SK-N-SH (cell line): ENCODE measurements at regions of chr2 and their contacts with region 1.

Region 1: GRCh38 chr2:27281855-27282559 is at the start of gene TRIM54:
- DNase-seq: no peak
- H3K4me3 ChIP-seq: no peak within 1 kb of the TSS
- H3K27ac ChIP-seq: no peak within 1 kb of the TSS
- H3K4me1 ChIP-seq: peaks cover 0 to 23% of the 10 kb centered on the region in 2 experiments; a peak in 3 of 4 replicates
- H3K27me3 ChIP-seq: peaks cover 12% of the 10 kb centered on the region; the same call in 1 of the 2 replicates
- CTCF ChIP-seq: no peak
- EP300 ChIP-seq: no peak
- RAD21 ChIP-seq: no peak
- polyA plus RNA-seq, gene TRIM54: 0.28 and 0.36 TPM in 2 replicates

Region 2: DNA sequence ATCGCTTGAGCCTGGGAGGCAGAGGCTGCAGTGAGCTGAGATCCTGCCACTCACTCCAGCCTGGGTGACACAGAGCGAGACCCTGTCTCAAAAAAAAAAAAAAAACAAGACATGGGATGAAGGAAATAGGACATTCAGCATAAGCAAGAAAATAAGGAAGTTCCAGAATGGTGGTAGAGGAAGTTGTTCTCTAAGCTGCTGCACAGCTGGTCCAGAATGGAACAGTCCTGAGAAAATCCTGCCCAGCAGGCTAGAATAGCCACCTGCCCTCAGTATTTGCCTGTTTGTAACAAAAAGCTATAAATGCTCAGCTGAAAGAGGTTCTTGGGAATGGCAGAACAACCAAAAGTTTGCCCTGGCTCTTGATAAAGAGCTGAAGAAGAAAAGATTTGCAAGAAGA is 322.7 kb before region 1 on chr2:
- CTCF ChIA-PET with region 1: interaction called, 13 read pairs
- POLR2A ChIA-PET with region 1: no interaction called
- DNase-seq: no peak
- H3K4me3 ChIP-seq: no peak overlapping the region
- H3K27ac ChIP-seq: no peak overlapping the region
- H3K4me1 ChIP-seq: peaks cover 0 to 3% of the 10 kb centered on the region in 2 experiments; a peak in 1 of 4 replicates
- H3K27me3 ChIP-seq: peaks cover 48% of the 10 kb centered on the region
- CTCF ChIP-seq: no peak
- EP300 ChIP-seq: no peak
- RAD21 ChIP-seq: no peak

Region 3: GRCh38 chr2:27117995-27118524 is 163.9 kb before region 1 on chr2:
- CTCF ChIA-PET with region 1: interaction called, 12 read pairs
- POLR2A ChIA-PET with region 1: no interaction called
- DNase-seq: peak; percentile 52
- H3K4me3 ChIP-seq: peak overlapping the region; percentile 60 to 70
- H3K27ac ChIP-seq: peak overlapping the region in 1 of 2 experiments; percentile 48; a peak in 1 of 4 replicates
- H3K4me1 ChIP-seq: peaks cover 0 to 12% of the 10 kb centered on the region in 2 experiments; a peak in 1 of 4 replicates
- H3K27me3 ChIP-seq: no peaks in the 10 kb centered on the region
- CTCF ChIP-seq: no peak
- EP300 ChIP-seq: no peak
- RAD21 ChIP-seq: no peak

Region 4: GRCh38 chr2:27185331-27186026 is 96.5 kb before region 1 on chr2:
- CTCF ChIA-PET with region 1: interaction called, 10 read pairs
- POLR2A ChIA-PET with region 1: no interaction called
- DNase-seq: no peak
- H3K4me3 ChIP-seq: no peak overlapping the region
- H3K27ac ChIP-seq: peak overlapping the region in 1 of 2 experiments; percentile 46; a peak in 2 of 4 replicates
- H3K4me1 ChIP-seq: peaks cover 0 to 26% of the 10 kb centered on the region in 2 experiments; a peak in 3 of 4 replicates
- H3K27me3 ChIP-seq: no peaks in the 10 kb centered on the region
- CTCF ChIP-seq: no peak
- EP300 ChIP-seq: no peak
- RAD21 ChIP-seq: no peak

Region 5: GRCh38 chr2:27233341-27233740 is 48.7 kb before region 1 on chr2:
- CTCF ChIA-PET with region 1: interaction called, 39 read pairs
- POLR2A ChIA-PET with region 1: interaction called, 6 read pairs
- DNase-seq: no peak
- H3K4me3 ChIP-seq: no peak overlapping the region
- H3K27ac ChIP-seq: no peak overlapping the region
- H3K4me1 ChIP-seq: no peaks in the 10 kb centered on the region
- H3K27me3 ChIP-seq: no peaks in the 10 kb centered on the region
- CTCF ChIP-seq: no peak
- EP300 ChIP-seq: no peak
- RAD21 ChIP-seq: no peak

Region 6: DNA sequence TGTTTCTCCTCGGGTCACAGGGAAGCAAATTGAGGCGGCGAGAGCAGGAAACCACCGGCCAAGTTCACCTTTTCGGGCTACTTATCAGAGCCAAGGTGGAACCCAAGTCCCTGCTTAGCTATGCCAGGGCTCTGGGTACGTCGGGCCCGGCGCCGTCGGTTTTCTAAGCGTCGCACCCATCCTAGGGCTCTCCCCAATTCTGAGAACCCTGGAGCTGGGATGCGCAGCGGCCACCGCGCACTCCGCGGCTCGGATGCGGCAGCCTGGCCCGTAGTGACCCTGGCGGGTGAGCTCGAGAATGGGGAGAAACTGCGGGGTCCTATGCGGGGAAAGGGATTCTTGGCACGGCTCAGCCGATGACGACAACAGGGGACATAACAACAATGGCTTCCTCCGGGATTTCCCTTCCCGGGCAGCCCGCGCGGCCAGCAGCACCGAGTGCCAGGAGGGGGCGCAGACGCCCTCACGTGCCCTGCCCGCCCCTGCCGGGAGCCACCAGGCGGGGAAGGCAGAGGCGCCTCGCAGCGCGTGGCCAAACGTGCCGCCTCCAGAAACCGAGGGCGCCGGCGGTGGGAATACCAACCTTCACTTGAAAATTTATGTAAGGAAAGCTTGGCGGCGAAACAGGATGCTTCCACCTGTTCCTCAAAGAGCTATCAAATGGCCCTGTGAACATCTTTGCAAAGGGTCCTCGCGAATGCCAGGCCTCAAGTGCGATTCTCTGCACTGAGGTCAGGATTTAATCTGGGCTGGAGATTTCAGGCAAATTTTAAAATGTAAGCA is 17.1 kb before region 1 on chr2:
- CTCF ChIA-PET with region 1: interaction called, 392 read pairs
- POLR2A ChIA-PET with region 1: interaction called, 7 read pairs
- DNase-seq: peak; percentile 100
- H3K4me3 ChIP-seq: peak overlapping the region; percentile 49 to 55
- H3K27ac ChIP-seq: no peak overlapping the region
- H3K4me1 ChIP-seq: peaks cover 6 to 28% of the 10 kb centered on the region in 2 experiments; a peak in 1 of 4 replicates
- H3K27me3 ChIP-seq: peaks cover 86% of the 10 kb centered on the region
- CTCF ChIP-seq: peak; percentile 78
- EP300 ChIP-seq: no peak
- RAD21 ChIP-seq: peak; percentile 58

Region 7: GRCh38 chr2:27494944-27495554 is 213.0 kb after region 1 on chr2 and contains the start of gene FNDC4:
- CTCF ChIA-PET with region 1: no interaction called
- POLR2A ChIA-PET with region 1: no interaction called
- DNase-seq: peak; percentile 94
- H3K4me3 ChIP-seq: peak within 1 kb of the TSS; percentile 81 to 85
- H3K27ac ChIP-seq: peak within 1 kb of the TSS in 1 of 2 experiments; percentile 53; a peak in 1 of 4 replicates
- H3K4me1 ChIP-seq: peaks cover 7 to 10% of the 10 kb centered on the region in 2 experiments
- H3K27me3 ChIP-seq: no peaks in the 10 kb centered on the region
- CTCF ChIP-seq: no peak
- EP300 ChIP-seq: no peak
- RAD21 ChIP-seq: no peak
- polyA plus RNA-seq, gene FNDC4: 26.5 and 27.0 TPM in 2 replicates